CD8-positive, alpha-beta T cell (primary cell): ENCODE measurements at regions of chr14 and their contacts with region 1.

Region 1: DNA sequence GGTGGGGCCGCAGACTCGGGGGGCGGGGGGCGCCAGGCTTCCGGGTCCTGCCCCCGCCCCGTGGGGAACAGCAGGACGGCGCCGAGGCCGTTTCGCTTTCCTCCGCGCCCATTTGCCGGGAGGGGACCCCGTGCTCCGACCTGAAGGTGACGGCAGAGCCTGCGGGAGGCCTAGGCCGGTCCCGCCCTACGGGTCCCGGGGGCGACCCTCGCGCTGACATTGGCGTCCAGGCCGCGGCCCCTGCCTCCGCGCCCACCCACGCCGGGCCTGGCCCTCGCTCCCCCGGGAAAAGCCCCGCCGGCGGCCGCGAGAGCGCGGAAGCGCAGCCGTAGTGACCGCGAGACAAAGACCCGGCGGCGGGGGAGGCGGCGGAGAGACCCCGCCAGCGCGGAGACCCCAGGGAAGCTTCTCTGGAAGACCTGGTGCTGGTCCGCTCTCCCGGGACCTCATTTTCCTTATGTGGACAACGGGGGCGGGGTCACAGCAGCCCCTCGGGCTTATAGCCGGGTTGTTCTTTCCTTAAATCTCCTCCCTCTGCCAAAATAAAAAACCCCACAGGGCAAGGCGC is 37.1 kb upstream of the RCOR1 start:
- DNase-seq: peak; percentile 35 to 79 (median 60)
- ATAC-seq: peak; percentile 92
- H3K4me3 ChIP-seq: peak overlapping the region; percentile 62 to 80
- H3K4me3 Mint-ChIP-seq: peak overlapping the region; percentile 79
- H3K27ac ChIP-seq: peak overlapping the region; percentile 74 to 83
- H3K27ac Mint-ChIP-seq: peak overlapping the region; percentile 82
- H3K4me1 ChIP-seq: peaks cover 4% of the 10 kb centered on the region
- H3K4me1 Mint-ChIP-seq: peaks cover 3% of the 10 kb centered on the region
- H3K27me3 ChIP-seq: no peaks in the 10 kb centered on the region
- H3K27me3 Mint-ChIP-seq: peaks cover under 1% of the 10 kb centered on the region
- CTCF ChIP-seq: no peak

Region 2: GRCh38 chr14:102568114-102568621 is 12.8 kb after region 1 on chr14:
- CTCF ChIA-PET with region 1: interaction called, 3 read pairs
- POLR2A ChIA-PET with region 1: no interaction called
- intact Hi-C with region 1: loop called in 1 of 2 experiments (anchors 1 kb)
- DNase-seq: peak in 8 of 9 experiments; percentile 29 to 74 (median 50)
- ATAC-seq: peak; percentile 98
- H3K4me3 ChIP-seq: peak overlapping the region in 1 of 2 experiments; percentile 32
- H3K4me3 Mint-ChIP-seq: peak overlapping the region; percentile 73
- H3K27ac ChIP-seq: peak overlapping the region; percentile 13 to 61
- H3K27ac Mint-ChIP-seq: peak overlapping the region; percentile 88
- H3K4me1 ChIP-seq: peaks cover 19% of the 10 kb centered on the region
- H3K4me1 Mint-ChIP-seq: peaks cover 16% of the 10 kb centered on the region
- H3K27me3 ChIP-seq: no peaks in the 10 kb centered on the region
- H3K27me3 Mint-ChIP-seq: no peaks in the 10 kb centered on the region
- CTCF ChIP-seq: no peak

Region 3: DNA sequence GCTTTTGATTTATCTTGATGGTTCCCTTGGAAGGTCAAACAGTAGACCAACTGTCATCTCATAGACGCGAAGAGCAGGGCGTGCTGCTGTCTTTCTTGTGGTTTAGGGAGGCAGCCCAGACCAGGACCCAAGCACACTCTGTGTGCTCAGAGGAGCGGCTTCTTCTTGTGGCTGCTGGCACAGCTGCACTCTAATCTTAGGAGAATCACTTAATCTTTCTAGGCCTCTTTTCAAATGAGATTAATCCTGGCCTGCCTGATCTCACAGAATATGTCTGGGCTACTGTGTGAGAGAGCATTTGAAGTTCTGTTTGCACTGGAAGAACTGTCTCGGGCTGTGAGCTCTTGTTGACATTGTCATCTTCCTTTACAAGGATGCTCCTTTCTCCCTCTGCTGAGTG is 161.9 kb after region 1 on chr14:
- CTCF ChIA-PET with region 1: no interaction called
- POLR2A ChIA-PET with region 1: no interaction called
- intact Hi-C with region 1: no loop called
- DNase-seq: no peak
- ATAC-seq: no peak
- H3K4me3 ChIP-seq: no peak overlapping the region
- H3K4me3 Mint-ChIP-seq: no peak overlapping the region
- H3K27ac ChIP-seq: no peak overlapping the region
- H3K27ac Mint-ChIP-seq: peak overlapping the region; percentile 11
- H3K4me1 ChIP-seq: no peaks in the 10 kb centered on the region
- H3K4me1 Mint-ChIP-seq: peaks cover 8% of the 10 kb centered on the region
- H3K27me3 ChIP-seq: no peaks in the 10 kb centered on the region
- H3K27me3 Mint-ChIP-seq: no peaks in the 10 kb centered on the region
- CTCF ChIP-seq: no peak